CD8-positive, alpha-beta T cell (primary cell): ENCODE measurements at regions of chr16 and their contacts with region 1.

Region 1: DNA sequence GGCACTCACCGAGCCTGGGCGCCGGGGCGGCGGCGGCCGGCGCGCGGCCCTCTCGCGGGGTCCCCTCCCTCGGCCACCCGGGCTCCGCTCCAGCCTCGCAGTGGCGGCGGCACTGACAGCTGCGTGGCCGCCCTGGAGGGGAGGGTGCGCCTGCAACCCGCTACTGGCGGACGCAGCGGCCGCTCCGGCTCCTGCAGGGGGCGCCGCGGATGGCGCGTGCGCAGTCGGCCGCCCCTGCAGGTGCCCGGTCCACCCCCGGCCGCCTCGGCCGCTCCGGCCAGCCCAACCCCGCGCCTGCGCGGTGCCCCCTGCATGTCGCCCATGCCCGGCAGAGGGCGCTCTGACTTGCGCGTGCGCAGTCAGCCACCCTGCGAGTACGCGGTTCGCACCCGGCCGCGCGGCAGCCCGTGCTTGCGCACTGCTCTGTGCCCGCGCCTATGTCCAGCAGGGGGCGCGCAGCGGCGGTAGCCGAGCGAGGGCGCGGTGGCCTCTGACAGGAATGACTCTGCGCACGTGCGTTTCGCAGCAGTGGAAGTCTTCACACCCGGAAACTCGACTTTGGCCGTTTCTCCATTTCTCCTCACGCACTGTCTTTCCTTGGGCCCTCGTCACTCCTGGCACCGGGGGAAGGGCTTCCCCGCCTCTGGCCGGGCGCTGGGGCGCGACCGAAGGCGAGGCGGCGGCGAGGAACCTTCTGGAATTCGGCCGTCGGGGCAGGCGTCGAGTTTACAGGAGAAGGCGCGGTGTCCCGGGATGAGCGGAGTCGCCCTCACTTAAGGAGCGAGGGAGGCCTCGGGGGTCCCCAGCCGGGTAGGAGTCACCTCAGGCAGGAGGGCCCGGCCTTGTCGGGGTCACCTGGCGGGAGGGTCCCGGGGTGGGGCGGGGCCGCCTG is at the start of gene ABCA3:
- DNase-seq: peak; percentile 87 to 98 (median 93)
- ATAC-seq: peak; percentile 89
- H3K4me3 ChIP-seq: peak within 1 kb of the TSS; percentile 59 to 62
- H3K4me3 Mint-ChIP-seq: peak within 1 kb of the TSS; percentile 85
- H3K27ac ChIP-seq: no peak within 1 kb of the TSS
- H3K27ac Mint-ChIP-seq: peak within 1 kb of the TSS; percentile 71
- H3K4me1 ChIP-seq: peaks cover 9% of the 10 kb centered on the region
- H3K4me1 Mint-ChIP-seq: peaks cover 13% of the 10 kb centered on the region
- H3K27me3 ChIP-seq: peaks cover 0 to 3% of the 10 kb centered on the region in 2 experiments
- H3K27me3 Mint-ChIP-seq: peaks cover 5% of the 10 kb centered on the region
- CTCF ChIP-seq: peak; percentile 100
- total RNA-seq, gene ABCA3: 3.7 to 4.0 TPM

Region 2: GRCh38 chr16:1964506-1965395 is 376.1 kb before region 1 on chr16 and contains the start of gene RPS2:
- CTCF ChIA-PET with region 1: no interaction called
- POLR2A ChIA-PET with region 1: no interaction called
- intact Hi-C with region 1: no loop called
- DNase-seq: peak; percentile 92 to 99 (median 98)
- ATAC-seq: peak; percentile 89
- H3K4me3 ChIP-seq: peak within 1 kb of the TSS; percentile 82 to 99
- H3K4me3 Mint-ChIP-seq: peak within 1 kb of the TSS; percentile 94
- H3K27ac ChIP-seq: peak within 1 kb of the TSS; percentile 98 to 99
- H3K27ac Mint-ChIP-seq: peak within 1 kb of the TSS; percentile 96
- H3K4me1 ChIP-seq: peaks cover 41% of the 10 kb centered on the region
- H3K4me1 Mint-ChIP-seq: peaks cover 45% of the 10 kb centered on the region
- H3K27me3 ChIP-seq: no peaks in the 10 kb centered on the region
- H3K27me3 Mint-ChIP-seq: no peaks in the 10 kb centered on the region
- CTCF ChIP-seq: no peak
- total RNA-seq, gene RPS2: 4,060 to 4,094 TPM

Region 3: DNA sequence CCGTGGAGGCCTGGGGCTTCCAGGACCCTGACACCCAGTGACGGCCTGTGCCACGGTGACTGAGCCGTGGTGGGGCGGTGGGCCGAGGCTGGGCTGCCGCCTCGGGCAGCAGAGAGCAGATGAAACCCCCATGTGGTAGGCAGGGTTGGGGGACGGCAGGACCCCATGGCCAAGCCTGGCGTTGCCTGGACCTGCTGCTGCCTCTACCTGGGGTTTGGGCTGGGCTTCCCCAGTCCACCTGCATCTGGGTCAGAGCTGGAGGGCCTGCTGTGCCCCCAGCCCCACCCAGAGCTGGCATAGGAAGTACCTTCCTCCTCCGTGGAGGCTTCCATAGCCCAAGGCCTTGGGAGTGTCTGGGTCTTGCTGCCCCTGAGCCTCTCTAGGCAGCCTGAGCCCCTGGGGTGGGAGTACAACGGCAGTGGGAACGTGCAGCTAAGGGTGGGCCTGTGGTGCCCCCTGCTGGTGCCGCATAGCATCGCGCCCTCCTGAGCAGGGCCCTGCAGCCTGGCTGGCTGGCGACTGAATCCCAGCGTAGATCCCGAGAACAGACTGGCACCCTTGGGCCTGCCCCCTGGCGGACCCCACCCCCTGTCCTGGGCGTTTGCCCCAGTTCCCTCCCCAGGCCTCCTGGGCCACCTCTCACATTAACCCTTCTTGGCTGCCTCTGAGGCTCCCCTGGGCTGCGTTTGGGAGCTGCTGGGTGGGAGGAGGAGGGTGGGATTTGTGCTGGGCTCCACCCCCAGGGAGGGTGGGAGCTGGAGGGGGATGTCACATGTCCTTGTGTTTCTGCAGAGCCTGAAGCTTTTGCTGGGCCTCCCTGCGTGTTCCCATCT is 160.3 kb after region 1 on chr16:
- CTCF ChIA-PET with region 1: interaction called, 8 read pairs
- POLR2A ChIA-PET with region 1: no interaction called
- intact Hi-C with region 1: loop called in 1 of 2 experiments (anchors 1 kb)
- DNase-seq: peak; percentile 67 to 89 (median 80)
- ATAC-seq: peak; percentile 100
- H3K4me3 ChIP-seq: no peak overlapping the region
- H3K4me3 Mint-ChIP-seq: no peak overlapping the region
- H3K27ac ChIP-seq: no peak overlapping the region
- H3K27ac Mint-ChIP-seq: no peak overlapping the region
- H3K4me1 ChIP-seq: peaks cover 6% of the 10 kb centered on the region
- H3K4me1 Mint-ChIP-seq: peaks cover 2% of the 10 kb centered on the region
- H3K27me3 ChIP-seq: no peaks in the 10 kb centered on the region
- H3K27me3 Mint-ChIP-seq: no peaks in the 10 kb centered on the region
- CTCF ChIP-seq: peak; percentile 87

Region 4: DNA sequence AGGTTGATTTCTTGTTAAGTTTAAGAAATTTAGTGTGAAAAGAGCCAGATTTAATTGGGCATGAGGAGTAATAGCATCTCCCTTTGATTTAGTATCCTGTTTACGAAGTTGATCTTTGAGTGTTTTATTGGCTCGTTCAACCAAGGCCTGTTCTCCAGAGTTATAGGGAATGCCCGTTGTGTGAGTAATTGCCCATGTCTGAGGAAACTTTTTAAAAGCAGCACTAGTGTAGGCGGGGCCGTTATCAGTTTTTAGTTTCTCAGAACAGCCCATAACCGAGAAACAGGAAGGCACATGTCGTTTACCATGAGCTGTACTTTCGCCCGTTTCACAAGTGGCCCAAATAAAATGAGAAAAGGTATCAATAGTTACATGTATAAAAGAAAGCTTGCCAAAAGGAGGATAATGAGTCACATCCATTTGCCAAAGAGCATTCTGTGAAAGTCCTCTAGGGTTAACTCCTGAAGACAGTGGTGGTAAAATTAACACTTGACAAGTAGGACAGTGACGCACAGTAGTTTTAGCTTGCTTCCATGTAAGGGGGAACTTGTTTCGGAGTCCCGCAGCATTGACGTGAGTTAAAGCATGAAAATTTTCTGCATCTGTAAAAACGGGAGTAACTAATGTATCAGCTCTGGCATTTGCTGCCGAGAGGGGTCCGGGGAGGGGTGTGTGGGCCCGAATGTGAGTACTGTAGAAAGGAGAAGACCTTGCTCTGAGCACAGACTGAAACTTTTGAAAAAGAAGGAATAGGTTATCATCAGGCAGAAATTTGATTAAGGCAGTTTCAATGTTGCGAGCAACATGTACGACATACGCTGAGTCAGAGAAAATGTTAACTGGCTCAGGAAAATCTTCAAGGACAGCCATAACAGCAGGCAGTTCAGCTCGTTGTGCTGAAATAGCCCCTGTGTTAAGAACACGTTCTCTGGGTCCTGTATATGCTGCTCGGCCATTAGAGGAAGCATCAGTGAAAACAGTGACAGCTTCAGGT is 323.0 kb after region 1 on chr16:
- CTCF ChIA-PET with region 1: no interaction called
- POLR2A ChIA-PET with region 1: no interaction called
- intact Hi-C with region 1: loop called in 1 of 2 experiments (anchors 5 kb)
- DNase-seq: peak in 3 of 9 experiments; percentile 34 to 61 (median 56)
- ATAC-seq: peak; percentile 70
- H3K4me3 ChIP-seq: no peak overlapping the region
- H3K4me3 Mint-ChIP-seq: no peak overlapping the region
- H3K27ac ChIP-seq: peak overlapping the region in 1 of 2 experiments; percentile 36
- H3K27ac Mint-ChIP-seq: peak overlapping the region; percentile 58
- H3K4me1 ChIP-seq: no peaks in the 10 kb centered on the region
- H3K4me1 Mint-ChIP-seq: peaks cover 27% of the 10 kb centered on the region
- H3K27me3 ChIP-seq: no peaks in the 10 kb centered on the region
- H3K27me3 Mint-ChIP-seq: no peaks in the 10 kb centered on the region
- CTCF ChIP-seq: no peak